Ovary (tissue), 10 donors: ENCODE measurements at regions of chr2 and their contacts with region 1.

Region 1: DNA sequence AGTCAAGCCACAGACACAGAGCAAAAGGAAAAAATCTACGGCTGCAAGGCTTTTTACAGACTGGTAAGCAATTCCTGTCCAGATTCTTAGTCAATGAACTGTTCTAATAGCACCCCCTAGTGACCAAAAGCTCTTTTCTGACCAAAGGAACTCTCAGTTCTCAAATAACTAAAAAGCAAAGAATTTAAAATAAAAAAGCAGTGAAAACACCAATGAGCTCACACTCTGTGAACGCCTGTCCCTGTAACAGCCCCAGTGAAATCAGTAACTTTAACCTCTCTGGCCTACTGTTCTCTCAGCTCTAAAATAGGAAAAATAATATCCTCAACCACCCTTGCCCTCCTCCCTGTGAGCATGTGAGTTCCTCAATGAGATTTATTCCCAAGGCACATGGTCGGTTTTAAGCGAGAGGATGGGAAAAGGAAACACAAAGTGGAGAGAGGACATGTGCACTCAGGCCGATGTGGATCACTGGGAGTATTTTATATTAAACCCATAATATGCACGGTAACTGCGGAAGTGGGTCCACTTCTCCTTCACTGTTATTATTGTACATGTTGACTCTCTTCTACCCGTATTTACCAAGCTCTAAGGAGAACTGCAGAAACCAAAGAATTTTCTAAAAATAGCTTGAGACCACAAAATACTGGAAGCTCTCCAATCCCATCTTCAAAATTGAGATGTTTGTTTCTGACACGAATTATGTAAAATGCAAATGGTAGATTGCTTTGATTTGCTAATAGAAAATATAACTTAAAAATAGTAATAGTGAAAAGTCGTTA is 128.5 kb downstream of the STK39 start:
- DNase-seq: peak in 1 of 5 donors; percentile 17
- H3K4me3 ChIP-seq: no peak overlapping the region
- H3K27ac ChIP-seq: no peak overlapping the region
- H3K4me1 ChIP-seq: peaks cover 4% of the 10 kb centered on the region
- H3K27me3 ChIP-seq: no peaks in the 10 kb centered on the region
- CTCF ChIP-seq: peak; percentile 44 to 50 (median 48)
- EP300 ChIP-seq: no peak
- POLR2A ChIP-seq: no peak

Region 2: DNA sequence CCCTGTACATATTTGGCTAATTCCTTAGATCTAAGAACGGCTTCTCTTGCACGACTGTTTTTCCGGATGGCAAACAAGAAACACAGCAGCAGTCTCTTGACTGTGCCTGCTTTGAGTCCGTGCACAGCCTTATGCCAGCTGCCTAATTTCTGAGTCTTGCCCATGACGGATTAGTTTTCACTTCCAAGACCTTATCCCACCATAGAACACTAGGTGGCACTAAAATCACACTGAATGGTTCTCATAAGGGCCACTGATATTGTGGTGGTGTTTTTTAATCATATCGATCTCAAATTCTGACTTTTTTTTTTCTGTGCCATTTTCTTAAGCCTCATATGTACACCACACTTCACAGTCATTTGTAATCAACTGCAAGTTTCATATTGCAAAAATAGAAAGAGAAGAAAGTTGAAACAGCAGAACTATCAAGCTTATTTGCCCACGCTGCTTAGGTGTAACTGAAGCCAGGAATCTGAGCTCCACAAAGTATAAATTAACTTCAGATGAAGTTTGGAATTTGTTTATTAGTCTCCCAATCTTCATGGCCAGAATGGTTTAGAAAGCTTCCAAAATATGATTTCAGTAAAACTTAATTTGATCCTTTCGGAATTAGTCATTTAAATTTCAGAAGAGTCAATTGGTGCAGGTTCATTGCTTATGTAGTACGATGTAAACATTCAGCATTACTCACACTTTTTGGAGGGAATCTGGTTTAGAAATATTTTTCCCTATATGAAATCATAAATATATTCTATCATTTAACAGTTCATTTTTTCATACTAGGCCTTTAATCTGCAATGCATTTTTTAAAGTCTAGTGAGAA is 1579.4 kb before region 1 on chr2:
- intact Hi-C with region 1: loop called in 1 of 4 experiments (anchors 10 kb)
- DNase-seq: no peak
- H3K4me3 ChIP-seq: peak overlapping the region; percentile 2
- H3K27ac ChIP-seq: no peak overlapping the region
- H3K4me1 ChIP-seq: no peaks in the 10 kb centered on the region
- H3K27me3 ChIP-seq: no peaks in the 10 kb centered on the region
- CTCF ChIP-seq: peak; percentile 24 to 42 (median 40)
- EP300 ChIP-seq: no peak
- POLR2A ChIP-seq: no peak

Region 3: DNA sequence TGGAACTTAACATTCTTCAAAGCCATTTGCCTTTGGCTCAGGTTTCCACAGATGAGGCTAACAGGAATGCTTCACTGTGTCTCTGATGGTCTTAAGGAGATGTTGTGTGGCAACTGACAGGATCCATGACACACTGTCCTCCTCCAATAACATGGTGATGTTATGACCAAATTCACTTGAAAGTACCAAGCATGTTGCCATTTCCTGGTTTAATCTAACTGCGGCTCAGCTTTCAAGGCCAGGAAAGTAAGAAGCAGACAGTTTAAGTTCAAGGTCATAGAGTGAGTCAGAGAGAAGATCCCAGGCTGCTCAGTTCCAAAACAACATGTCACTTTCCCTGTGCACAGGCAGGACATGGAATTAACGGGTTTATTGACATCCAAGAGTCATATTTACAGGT is 385.2 kb before region 1 on chr2:
- intact Hi-C with region 1: no loop called
- DNase-seq: peak in 3 of 5 donors; percentile 14 to 20 (median 18)
- H3K4me3 ChIP-seq: no peak overlapping the region
- H3K27ac ChIP-seq: peak overlapping the region in 1 of 2 donors; percentile 62
- H3K4me1 ChIP-seq: peaks cover 10% of the 10 kb centered on the region
- H3K27me3 ChIP-seq: no peaks in the 10 kb centered on the region
- CTCF ChIP-seq: no peak
- EP300 ChIP-seq: no peak
- POLR2A ChIP-seq: no peak

Region 4: GRCh38 chr2:168136392-168136977 is 17.6 kb after region 1 on chr2:
- intact Hi-C with region 1: no loop called
- DNase-seq: no peak
- H3K4me3 ChIP-seq: no peak overlapping the region
- H3K27ac ChIP-seq: no peak overlapping the region
- H3K4me1 ChIP-seq: no peaks in the 10 kb centered on the region
- H3K27me3 ChIP-seq: no peaks in the 10 kb centered on the region
- CTCF ChIP-seq: no peak
- EP300 ChIP-seq: no peak
- POLR2A ChIP-seq: no peak

Region 5: DNA sequence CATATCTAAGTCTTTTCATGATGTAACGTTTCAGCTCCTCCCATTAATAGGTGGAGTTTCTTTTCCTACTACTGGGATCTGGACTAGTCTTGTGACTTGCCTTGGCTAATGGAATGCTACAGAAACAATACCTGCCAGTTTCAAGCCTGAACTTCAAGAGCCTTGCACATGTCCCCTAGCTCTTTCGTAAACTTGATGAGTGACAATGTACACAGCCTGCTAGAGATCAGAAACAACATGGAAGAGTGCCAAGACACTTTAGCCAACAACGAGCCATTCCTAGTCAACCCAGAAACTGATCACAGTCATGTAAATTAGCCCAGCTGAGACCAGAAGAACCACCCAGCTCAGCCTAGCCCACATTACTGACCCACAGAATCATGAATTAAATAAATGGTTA is 153.3 kb after region 1 on chr2:
- intact Hi-C with region 1: no loop called
- DNase-seq: no peak
- H3K4me3 ChIP-seq: no peak overlapping the region
- H3K27ac ChIP-seq: no peak overlapping the region
- H3K4me1 ChIP-seq: no peaks in the 10 kb centered on the region
- H3K27me3 ChIP-seq: no peaks in the 10 kb centered on the region
- CTCF ChIP-seq: no peak
- EP300 ChIP-seq: no peak
- POLR2A ChIP-seq: no peak